ENCODE measurements at regions of chr10 and their contacts with region 1.

Region 1: DNA sequence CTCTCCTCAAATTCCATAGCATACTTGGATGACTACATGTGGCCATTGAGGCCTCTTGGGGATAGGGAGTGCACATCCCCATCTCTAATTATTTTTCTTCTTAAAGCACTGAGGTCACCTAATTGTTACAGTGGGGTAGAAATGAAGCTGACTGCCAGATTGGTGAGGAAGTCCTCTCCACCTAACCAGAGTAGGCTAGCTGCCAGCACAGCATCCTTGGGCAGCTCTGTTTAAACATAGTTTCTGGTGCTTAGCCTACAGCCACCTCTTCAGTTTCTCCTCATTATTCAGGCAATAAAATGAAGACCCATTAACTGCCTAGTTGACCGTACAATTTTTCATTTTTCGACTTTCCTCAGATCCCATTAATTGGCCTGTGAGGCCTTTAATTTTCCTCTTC is 104.6 kb downstream of the MLLT10 start:
- DNase-seq: no peak
- H3K4me3 ChIP-seq: no peak overlapping the region
- H3K27ac ChIP-seq: no peak overlapping the region
- H3K4me1 ChIP-seq: peaks cover 9 to 27% (median 17%) of the 10 kb centered on the region in 4 experiments
- H3K27me3 ChIP-seq: no peaks in the 10 kb centered on the region
- CTCF ChIP-seq: no peak
- EP300 ChIP-seq: no peak
- POLR2A ChIP-seq: no peak
- RAD21 ChIP-seq: no peak

Region 2: GRCh38 chr10:21626457-21627161 is 12.1 kb before region 1 on chr10:
- CTCF ChIA-PET with region 1: interaction called, 3 read pairs
- POLR2A ChIA-PET with region 1: interaction called, 13 read pairs
- DNase-seq: no peak
- H3K4me3 ChIP-seq: no peak overlapping the region
- H3K27ac ChIP-seq: no peak overlapping the region
- H3K4me1 ChIP-seq: no peaks in the 10 kb centered on the region
- H3K27me3 ChIP-seq: no peaks in the 10 kb centered on the region
- CTCF ChIP-seq: no peak
- EP300 ChIP-seq: no peak
- POLR2A ChIP-seq: no peak
- RAD21 ChIP-seq: no peak

Region 3: GRCh38 chr10:21687266-21688008 is 48.8 kb after region 1 on chr10:
- CTCF ChIA-PET with region 1: no interaction called
- POLR2A ChIA-PET with region 1: no interaction called
- DNase-seq: no peak
- H3K4me3 ChIP-seq: no peak overlapping the region
- H3K27ac ChIP-seq: no peak overlapping the region
- H3K4me1 ChIP-seq: no peaks in the 10 kb centered on the region
- H3K27me3 ChIP-seq: no peaks in the 10 kb centered on the region
- CTCF ChIP-seq: no peak
- EP300 ChIP-seq: no peak
- POLR2A ChIP-seq: no peak
- RAD21 ChIP-seq: no peak

Measured in H1 (cell line).